Right cardiac atrium (tissue), 5 donors: ENCODE measurements at regions of chr12 and their contacts with region 1.

Region 1: DNA sequence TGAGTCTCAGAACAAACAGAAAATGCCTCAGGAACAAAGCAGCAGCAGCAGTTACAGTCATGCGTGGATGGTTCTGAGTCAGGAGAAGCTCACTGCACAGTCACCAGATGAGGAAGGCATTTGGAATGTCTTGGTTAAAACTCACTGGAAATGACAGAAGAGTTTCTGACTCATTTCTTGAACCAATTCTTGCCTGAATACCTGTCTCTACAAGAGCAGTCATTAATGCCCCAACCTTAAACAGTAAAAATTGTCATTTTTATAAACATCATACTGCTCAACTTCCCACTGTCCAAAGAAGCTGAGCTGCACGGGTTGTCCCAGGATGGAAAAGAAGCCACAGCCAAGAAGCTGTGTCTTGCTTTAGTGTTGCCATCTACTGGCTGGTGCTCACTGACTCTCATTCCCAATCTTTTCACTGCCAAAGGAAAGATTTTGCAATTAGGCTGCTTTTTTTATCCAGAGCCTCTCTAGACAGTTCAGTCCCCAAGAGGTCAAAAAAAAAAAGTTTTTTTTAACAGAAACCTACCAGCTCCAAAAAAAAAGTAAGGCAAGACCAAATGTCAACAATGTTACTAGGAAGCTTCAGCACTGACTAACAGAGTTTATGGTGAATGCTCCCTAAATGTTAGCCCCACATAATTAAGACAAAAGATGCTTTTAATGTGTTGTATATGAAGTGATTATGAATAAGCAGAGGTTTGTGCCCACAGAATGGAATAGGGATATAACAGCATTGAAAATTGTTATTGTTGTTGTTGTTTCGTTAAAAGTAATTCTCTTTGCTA is 40.4 kb downstream of the KICS2 start:
- DNase-seq: peak in 2 of 3 donors; percentile 40 to 52
- ATAC-seq: peak; percentile 88 to 90
- H3K4me3 ChIP-seq: no peak overlapping the region
- H3K27ac ChIP-seq: peak overlapping the region; percentile 6
- H3K4me1 ChIP-seq: peaks cover 2% of the 10 kb centered on the region
- H3K27me3 ChIP-seq: no peaks in the 10 kb centered on the region

Region 2: GRCh38 chr12:63836936-63837335 is 344.8 kb before region 1 on chr12:
- intact Hi-C with region 1: loop called (anchors 2 to 10 kb)
- DNase-seq: no peak
- ATAC-seq: no peak
- H3K4me3 ChIP-seq: no peak overlapping the region
- H3K27ac ChIP-seq: no peak overlapping the region
- H3K4me1 ChIP-seq: no peaks in the 10 kb centered on the region
- H3K27me3 ChIP-seq: no peaks in the 10 kb centered on the region

Region 3: GRCh38 chr12:63843721-63844390 is 337.8 kb before region 1 on chr12:
- intact Hi-C with region 1: loop called (anchors 2 to 10 kb)
- DNase-seq: peak; percentile 95 to 97 (median 97)
- ATAC-seq: peak; percentile 96 to 97
- H3K4me3 ChIP-seq: peak overlapping the region; percentile 78
- H3K27ac ChIP-seq: peak overlapping the region; percentile 64
- H3K4me1 ChIP-seq: peaks cover 3% of the 10 kb centered on the region
- H3K27me3 ChIP-seq: no peaks in the 10 kb centered on the region

Region 4: GRCh38 chr12:64137117-64137516 is 44.6 kb before region 1 on chr12:
- intact Hi-C with region 1: no loop called
- DNase-seq: no peak
- ATAC-seq: no peak
- H3K4me3 ChIP-seq: no peak overlapping the region
- H3K27ac ChIP-seq: no peak overlapping the region
- H3K4me1 ChIP-seq: no peaks in the 10 kb centered on the region
- H3K27me3 ChIP-seq: no peaks in the 10 kb centered on the region

Region 5: GRCh38 chr12:64256166-64256800 is 74.6 kb after region 1 on chr12:
- intact Hi-C with region 1: loop called in 2 of 4 experiments (anchors 10 kb)
- DNase-seq: no peak
- ATAC-seq: peak in 1 of 2 donors; percentile 38
- H3K4me3 ChIP-seq: no peak overlapping the region
- H3K27ac ChIP-seq: no peak overlapping the region
- H3K4me1 ChIP-seq: no peaks in the 10 kb centered on the region
- H3K27me3 ChIP-seq: no peaks in the 10 kb centered on the region